Transverse colon (tissue), 4 donors: ENCODE measurements at regions of chr14 and their contacts with region 1.

Region 1: GRCh38 chr14:106417224-106418049 is 891.1 kb downstream of the TMEM121 start:
- DNase-seq: peak; percentile 61
- H3K4me3 ChIP-seq: no peak overlapping the region
- H3K27ac ChIP-seq: no peak overlapping the region
- H3K4me1 ChIP-seq: no peaks in the 10 kb centered on the region
- H3K27me3 ChIP-seq: peaks cover 4% of the 10 kb centered on the region
- CTCF ChIP-seq: peak in 4 of 5 experiments; percentile 26 to 41 (median 37)
- EP300 ChIP-seq: no peak
- POLR2A ChIP-seq: no peak

Region 2: DNA sequence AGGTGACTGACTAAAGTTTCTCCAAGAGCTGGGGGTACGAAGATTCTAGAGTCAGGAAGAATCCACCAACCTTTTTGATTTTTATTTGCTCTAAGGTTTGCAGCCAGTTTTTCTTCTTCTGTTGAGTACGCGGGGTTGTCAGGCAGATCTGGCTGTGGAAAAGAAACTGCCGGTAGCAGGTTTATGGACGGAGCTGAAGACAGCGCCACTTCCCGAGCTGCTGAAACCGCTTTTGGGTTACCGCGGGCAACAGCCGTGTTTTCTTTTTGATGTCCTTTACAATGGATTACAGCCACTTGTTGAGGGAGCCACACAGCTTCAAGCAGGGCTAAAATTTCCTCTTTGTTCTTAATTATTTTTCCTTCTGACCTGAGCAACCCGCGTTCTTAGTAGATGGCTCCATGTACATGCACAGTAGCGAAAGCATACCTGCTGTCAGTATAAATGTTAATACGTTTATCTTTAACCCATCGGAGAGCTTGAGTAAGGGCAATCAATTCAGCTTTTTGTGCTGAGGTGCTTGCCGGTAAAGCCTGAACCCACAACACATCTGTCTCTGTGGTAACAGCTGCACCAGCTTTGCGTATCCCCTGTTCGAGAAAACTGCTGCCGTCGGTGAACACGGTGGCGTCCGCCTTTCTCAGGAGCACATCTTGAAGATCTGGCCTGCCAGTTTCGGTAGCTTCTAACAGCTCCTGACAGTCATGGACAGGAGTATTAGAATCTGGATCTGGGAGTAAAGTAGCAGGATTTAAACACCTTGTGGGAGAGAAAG is 216.7 kb before region 1 on chr14:
- in situ Hi-C with region 1: no loop called
- intact Hi-C with region 1: no loop called
- DNase-seq: no peak
- H3K4me3 ChIP-seq: no peak overlapping the region
- H3K27ac ChIP-seq: no peak overlapping the region
- H3K4me1 ChIP-seq: no peaks in the 10 kb centered on the region
- H3K27me3 ChIP-seq: no peaks in the 10 kb centered on the region
- CTCF ChIP-seq: no peak
- EP300 ChIP-seq: no peak
- POLR2A ChIP-seq: no peak

Region 3: GRCh38 chr14:106395456-106396050 is 21.9 kb before region 1 on chr14:
- in situ Hi-C with region 1: no loop called
- intact Hi-C with region 1: loop called (anchors 1 kb)
- DNase-seq: no peak
- H3K4me3 ChIP-seq: no peak overlapping the region
- H3K27ac ChIP-seq: no peak overlapping the region
- H3K4me1 ChIP-seq: no peaks in the 10 kb centered on the region
- H3K27me3 ChIP-seq: no peaks in the 10 kb centered on the region
- CTCF ChIP-seq: no peak
- EP300 ChIP-seq: no peak
- POLR2A ChIP-seq: no peak